ENCODE measurements at regions of chr1 and their contacts with region 1.

Region 1: DNA sequence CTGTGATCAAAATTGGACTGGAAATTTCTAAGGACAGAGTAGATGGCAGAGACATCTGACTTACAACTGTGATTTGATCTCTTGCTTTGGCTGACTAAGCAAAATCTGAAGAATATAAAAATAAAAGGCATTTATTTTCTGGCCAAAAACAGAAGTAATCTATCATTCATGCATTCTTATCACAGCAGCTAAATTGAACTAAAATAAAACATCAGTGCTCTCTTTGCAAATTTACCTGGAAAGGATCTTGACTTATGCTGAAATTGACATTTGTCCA is 81.4 kb upstream of the ZNF678 start:
- DNase-seq: no peak

Region 2: GRCh38 chr1:227343727-227344551 is 138.0 kb before region 1 on chr1:
- intact Hi-C with region 1: no loop called
- DNase-seq: no peak

Region 3: DNA sequence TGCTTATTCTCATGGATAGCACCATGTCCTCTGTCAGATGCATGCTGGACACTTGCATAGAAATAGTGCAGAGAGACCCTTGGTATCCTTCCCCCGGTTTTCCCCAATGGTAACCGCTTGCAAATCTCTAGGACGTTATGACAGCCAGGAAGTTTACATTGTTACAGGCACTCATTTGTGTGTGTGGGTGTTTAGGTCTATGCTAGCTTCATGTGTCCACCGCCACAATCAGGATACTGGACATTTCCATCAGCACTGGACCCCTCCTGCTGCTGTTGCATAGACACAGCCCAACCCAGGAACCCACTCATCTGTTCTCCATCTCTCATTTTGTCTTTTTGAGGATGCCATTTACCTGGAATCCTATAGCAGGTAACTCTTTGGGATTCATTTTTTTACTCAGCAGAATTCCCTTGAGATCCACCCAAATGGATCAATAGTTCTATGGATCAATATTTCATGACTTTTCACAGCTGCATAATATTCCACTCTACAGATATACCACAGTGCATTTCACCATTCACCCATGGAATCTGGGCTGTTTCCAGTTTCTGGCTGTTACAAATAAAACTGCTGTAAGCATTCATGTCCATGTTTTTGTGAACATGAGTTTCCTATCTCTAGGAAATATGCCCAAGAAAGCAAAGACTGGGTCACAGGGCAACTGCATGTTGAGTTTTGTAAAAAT is 472.3 kb after region 1 on chr1:
- intact Hi-C with region 1: loop called (anchors 2 kb)
- DNase-seq: no peak

Measured in cardiac septum (tissue), 1 donor.